Left colon (tissue), 2 donors: ENCODE measurements at regions of chr6 and their contacts with region 1.

Region 1: GRCh38 chr6:28266962-28267694 is at the start of gene ZSCAN26:
- DNase-seq: peak; percentile 80 to 88
- ATAC-seq: peak; percentile 99
- total RNA-seq, gene ZSCAN26: 3.8 to 7.9 TPM

Region 2: GRCh38 chr6:28355743-28356665 is 88.9 kb after region 1 on chr6:
- intact Hi-C with region 1: loop called in 1 of 2 experiments (anchors 10 kb)
- DNase-seq: peak; percentile 78 to 82
- ATAC-seq: peak; percentile 85

Region 3: DNA sequence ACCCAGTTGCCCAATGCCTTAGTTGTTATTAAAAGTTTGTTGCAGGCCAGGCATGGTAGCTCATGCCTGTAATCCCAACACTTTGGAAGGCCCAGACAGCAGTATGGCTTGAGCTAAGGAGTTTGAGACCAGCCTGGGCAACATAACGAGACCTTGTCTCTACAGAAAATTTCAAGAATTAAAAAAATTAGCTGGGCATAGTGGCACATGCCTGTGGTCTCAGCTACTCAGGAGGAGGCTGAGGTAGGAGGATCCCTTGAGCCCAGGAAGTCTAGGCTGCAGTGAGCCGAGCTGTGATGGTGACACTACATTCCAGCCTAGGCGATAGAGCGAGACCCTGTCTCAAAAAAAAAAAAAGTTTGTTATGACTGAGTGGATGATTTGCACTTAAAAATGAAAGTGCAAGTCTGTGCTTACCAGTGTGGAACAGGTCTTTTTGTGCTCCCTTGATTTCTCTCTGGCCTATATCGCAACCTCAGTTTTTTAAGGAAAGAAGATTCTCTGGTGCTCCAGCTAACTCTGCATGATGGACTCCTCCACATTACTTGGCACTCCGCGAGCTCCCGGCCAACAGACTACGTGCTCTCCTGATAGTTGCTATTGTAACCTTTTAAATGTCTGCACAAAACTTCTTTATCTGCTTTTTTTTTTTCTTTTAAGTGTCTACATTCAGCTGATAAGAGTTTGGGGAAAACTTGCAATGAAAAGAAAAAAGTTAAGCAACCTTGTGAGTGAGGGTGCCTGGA is 104.8 kb after region 1 on chr6:
- intact Hi-C with region 1: no loop called
- DNase-seq: no peak
- ATAC-seq: no peak

Region 4: DNA sequence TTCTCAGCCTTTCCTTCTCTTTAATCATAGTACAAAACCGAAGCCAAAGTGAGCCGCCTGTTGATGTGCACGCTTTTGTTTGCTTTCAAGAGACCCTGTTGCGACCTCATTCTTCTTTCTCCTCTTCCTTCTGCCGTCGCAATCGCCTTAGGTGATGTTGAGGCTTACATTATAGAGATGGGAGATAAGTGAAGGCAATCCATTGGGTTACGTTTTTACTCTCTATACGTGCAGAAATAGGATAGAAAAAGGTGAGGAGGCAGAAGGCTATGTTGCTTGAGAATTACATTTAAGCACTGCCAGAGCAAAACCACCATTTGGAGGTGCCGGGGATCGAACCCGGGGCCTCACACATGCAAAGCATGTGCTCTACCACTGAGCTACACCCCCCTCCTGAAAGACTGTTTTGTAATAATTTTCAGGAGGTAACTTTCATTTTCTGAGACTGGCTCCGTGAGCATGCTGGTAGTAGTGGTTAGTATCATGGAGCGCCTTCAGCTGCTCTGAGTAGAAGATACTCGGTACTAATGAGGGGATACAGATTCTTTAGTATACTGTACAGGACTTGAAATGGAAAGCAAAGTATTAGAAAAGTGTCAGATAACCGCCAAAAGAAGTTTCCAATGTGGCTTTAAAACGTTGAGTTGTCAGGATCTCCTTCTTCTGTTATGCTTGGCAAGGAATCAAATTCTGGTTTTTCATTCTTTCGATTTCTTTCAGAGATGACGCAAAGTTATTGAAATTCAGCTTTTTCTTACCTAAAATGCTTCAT is 491.1 kb after region 1 on chr6:
- intact Hi-C with region 1: no loop called
- DNase-seq: no peak
- ATAC-seq: no peak